ENCODE measurements at regions of chr15 and their contacts with region 1.

Region 1: GRCh38 chr15:41331833-41332787 is at the start of gene OIP5:
- DNase-seq: peak; percentile 95 to 99 (median 98)
- H3K4me3 ChIP-seq: peak within 1 kb of the TSS; percentile 98
- H3K4me3 Mint-ChIP-seq: peak within 1 kb of the TSS; percentile 90 to 100 (median 99)
- H3K27ac ChIP-seq: peak within 1 kb of the TSS; percentile 76
- H3K27ac Mint-ChIP-seq: peak within 1 kb of the TSS; percentile 64 to 97 (median 96)
- H3K4me1 ChIP-seq: peaks cover 8% of the 10 kb centered on the region
- H3K4me1 Mint-ChIP-seq: peaks cover 24 to 53% (median 37%) of the 10 kb centered on the region in 3 donors
- H3K27me3 ChIP-seq: no peaks in the 10 kb centered on the region
- H3K27me3 Mint-ChIP-seq: peaks cover 0 to 1% of the 10 kb centered on the region in 2 donors
- total RNA-seq, gene OIP5: 16.2 to 19.0 TPM

Region 2: GRCh38 chr15:41230650-41231533 is 101.2 kb before region 1 on chr15 and contains the starts of genes CHP1 and EXD1:
- CTCF ChIA-PET with region 1: interaction called, 9 read pairs
- POLR2A ChIA-PET with region 1: interaction called, 10 read pairs
- DNase-seq: peak; percentile 92 to 96 (median 92)
- H3K4me3 ChIP-seq: peak within 1 kb of the TSS; percentile 84
- H3K4me3 Mint-ChIP-seq: peak within 1 kb of the TSS; percentile 88 to 96 (median 90)
- H3K27ac ChIP-seq: peak within 1 kb of the TSS; percentile 84
- H3K27ac Mint-ChIP-seq: peak within 1 kb of the TSS; percentile 93 to 98 (median 94)
- H3K4me1 ChIP-seq: peaks cover 19% of the 10 kb centered on the region
- H3K4me1 Mint-ChIP-seq: peaks cover 26 to 49% (median 36%) of the 10 kb centered on the region in 3 donors
- H3K27me3 ChIP-seq: no peaks in the 10 kb centered on the region
- H3K27me3 Mint-ChIP-seq: no peaks in the 10 kb centered on the region
- total RNA-seq, gene CHP1: 41.6 to 42.1 TPM
- total RNA-seq, gene EXD1: not detected

Region 3: DNA sequence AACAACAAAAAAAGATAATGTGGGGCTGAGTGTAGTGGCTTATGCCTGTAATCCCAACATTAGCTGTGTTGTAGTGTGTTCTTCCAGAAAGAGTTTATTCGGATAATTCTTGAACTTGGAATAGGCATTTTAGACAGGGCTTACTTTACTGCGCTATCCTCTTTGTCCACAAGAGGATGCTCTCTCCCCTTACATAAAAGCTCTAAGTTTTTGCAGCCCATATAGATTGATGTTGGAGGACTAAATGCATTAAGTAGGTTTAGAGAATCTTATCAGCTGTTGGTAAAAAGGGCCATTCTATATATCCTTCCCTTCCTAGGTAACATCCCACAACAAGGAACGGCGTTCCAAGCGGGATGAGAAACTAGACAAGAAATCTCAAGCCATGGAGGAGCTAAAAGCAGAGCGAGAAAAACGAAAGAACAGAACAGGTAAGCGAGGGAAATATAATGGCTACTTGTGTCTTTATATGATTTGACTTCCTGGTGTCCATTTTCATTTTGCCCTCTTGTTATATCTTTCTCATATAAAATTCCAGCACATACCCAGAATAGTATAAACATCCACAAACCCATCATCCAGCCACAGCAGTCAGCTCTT is 133.8 kb after region 1 on chr15:
- CTCF ChIA-PET with region 1: no interaction called
- POLR2A ChIA-PET with region 1: no interaction called
- DNase-seq: peak in 2 of 5 donors; percentile 21 to 28
- H3K4me3 ChIP-seq: no peak overlapping the region
- H3K4me3 Mint-ChIP-seq: peak overlapping the region in 3 of 7 donors; percentile 33 to 83 (median 72)
- H3K27ac ChIP-seq: no peak overlapping the region
- H3K27ac Mint-ChIP-seq: peak overlapping the region in 7 of 8 donors; percentile 41 to 91 (median 87)
- H3K4me1 ChIP-seq: no peaks in the 10 kb centered on the region
- H3K4me1 Mint-ChIP-seq: peaks cover 6 to 21% (median 20%) of the 10 kb centered on the region in 3 donors
- H3K27me3 ChIP-seq: no peaks in the 10 kb centered on the region
- H3K27me3 Mint-ChIP-seq: no peaks in the 10 kb centered on the region

Measured in CD8-positive, alpha-beta memory T cell (primary cell).